Gastrocnemius medialis (tissue), 4 donors: ENCODE measurements at regions of chr20 and their contacts with region 1.

Region 1: GRCh38 chr20:57438552-57438951 is 47.4 kb downstream of the RBM38 start:
- DNase-seq: peak in 1 of 2 donors; percentile 55
- ATAC-seq: no peak
- H3K4me3 ChIP-seq: no peak overlapping the region
- H3K27ac ChIP-seq: peak overlapping the region; percentile 93 to 97 (median 96)
- H3K4me1 ChIP-seq: peaks cover 72 to 82% of the 10 kb centered on the region in 2 donors
- H3K27me3 ChIP-seq: no peaks in the 10 kb centered on the region
- CTCF ChIP-seq: no peak
- POLR2A ChIP-seq: no peak

Region 2: DNA sequence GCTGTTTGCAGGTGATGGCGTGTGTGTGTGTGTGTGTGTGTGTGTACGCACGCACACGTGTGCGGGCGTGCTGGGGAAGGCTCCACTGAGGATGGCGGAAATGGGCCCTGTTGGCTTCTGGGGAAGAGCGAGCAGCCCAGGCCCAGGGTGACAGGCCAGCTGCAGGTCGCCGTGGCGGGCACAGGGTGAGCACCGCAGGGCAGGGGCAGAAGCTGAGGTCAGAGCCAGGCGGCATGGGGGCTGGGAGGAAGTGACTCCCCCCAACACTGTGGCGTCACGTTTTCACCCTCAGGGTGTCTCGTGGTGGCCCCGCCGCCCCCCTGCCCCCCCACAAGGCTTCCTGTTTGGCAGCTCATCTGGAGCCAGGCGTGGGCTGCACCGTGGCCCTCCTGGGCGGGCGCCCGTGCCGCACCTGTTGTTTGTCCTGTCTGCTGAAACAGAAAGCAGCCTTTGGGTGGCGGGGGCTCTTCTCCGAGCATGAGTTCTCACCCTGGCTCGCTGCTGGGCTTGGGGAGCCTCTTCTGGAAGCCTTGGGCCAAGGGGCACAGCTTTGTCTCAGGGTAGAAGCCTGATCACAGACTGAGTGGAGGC is 40.2 kb before region 1 on chr20:
- in situ Hi-C with region 1: loop called in 2 of 4 experiments (anchors 5 kb)
- intact Hi-C with region 1: loop called (anchors 1 kb)
- DNase-seq: peak; percentile 78 to 92
- ATAC-seq: peak; percentile 39 to 42
- H3K4me3 ChIP-seq: peak overlapping the region; percentile 11 to 35 (median 30)
- H3K27ac ChIP-seq: peak overlapping the region; percentile 96 to 99 (median 98)
- H3K4me1 ChIP-seq: peaks cover 79 to 97% of the 10 kb centered on the region in 2 donors
- H3K27me3 ChIP-seq: no peaks in the 10 kb centered on the region
- CTCF ChIP-seq: no peak
- POLR2A ChIP-seq: peak; percentile 52 to 70

Region 3: GRCh38 chr20:57414867-57415592 is 23.5 kb before region 1 on chr20:
- in situ Hi-C with region 1: no loop called
- intact Hi-C with region 1: no loop called
- DNase-seq: no peak
- ATAC-seq: no peak
- H3K4me3 ChIP-seq: no peak overlapping the region
- H3K27ac ChIP-seq: no peak overlapping the region
- H3K4me1 ChIP-seq: peaks cover 4 to 8% of the 10 kb centered on the region in 2 donors
- H3K27me3 ChIP-seq: no peaks in the 10 kb centered on the region
- CTCF ChIP-seq: no peak
- POLR2A ChIP-seq: no peak

Region 4: DNA sequence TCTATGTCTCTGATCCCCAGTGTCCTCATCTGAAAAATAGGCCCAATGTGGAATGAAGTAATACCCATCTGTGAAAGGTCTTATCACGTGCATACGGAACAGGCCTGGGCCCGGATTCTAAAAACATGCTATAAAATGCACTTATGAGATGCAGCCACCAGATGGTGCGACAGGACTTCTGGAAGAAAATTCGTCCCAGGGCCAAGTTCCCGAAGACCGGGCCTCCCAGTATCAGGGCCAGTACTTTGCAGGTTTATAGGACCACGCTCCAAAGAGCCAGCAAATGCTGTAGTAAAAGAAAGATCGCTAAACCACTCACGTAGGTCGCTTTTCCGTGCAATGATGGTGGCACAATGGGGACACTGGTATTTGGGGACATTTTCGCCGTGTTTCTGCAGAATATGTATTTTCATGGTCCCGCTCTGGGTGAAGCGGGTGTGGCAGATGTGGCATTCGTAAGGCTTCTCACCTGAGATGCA is 75.8 kb after region 1 on chr20:
- in situ Hi-C with region 1: no loop called
- intact Hi-C with region 1: no loop called
- DNase-seq: peak; percentile 49 to 53
- ATAC-seq: peak; percentile 62 to 81
- H3K4me3 ChIP-seq: no peak overlapping the region
- H3K27ac ChIP-seq: no peak overlapping the region
- H3K4me1 ChIP-seq: peaks cover 0 to 5% of the 10 kb centered on the region in 2 donors
- H3K27me3 ChIP-seq: no peaks in the 10 kb centered on the region
- CTCF ChIP-seq: peak; percentile 63 to 82 (median 75)
- POLR2A ChIP-seq: no peak